ENCODE measurements at regions of chr12 and their contacts with region 1.

Region 1: GRCh38 chr12:4857472-4858291 is 52.0 kb upstream of the KCNA1 start:
- ATAC-seq: peak; percentile 63 to 92 (median 84)
- H3K4me3 ChIP-seq: peak overlapping the region in 2 of 5 donors; percentile 6 to 13
- H3K27ac ChIP-seq: no peak overlapping the region
- H3K4me1 ChIP-seq: peaks cover 12 to 21% of the 10 kb centered on the region in 2 donors

Region 2: GRCh38 chr12:5003020-5003666 is 145.5 kb after region 1 on chr12:
- in situ Hi-C with region 1: loop called in 6 of 9 experiments (anchors 10 to 25 kb)
- ATAC-seq: peak; percentile 80 to 95 (median 90)
- H3K4me3 ChIP-seq: no peak overlapping the region
- H3K27ac ChIP-seq: no peak overlapping the region
- H3K4me1 ChIP-seq: no peaks in the 10 kb centered on the region

Measured in motor neuron (in vitro differentiated cells).